SK-N-SH (cell line): ENCODE measurements at regions of chr5 and their contacts with region 1.

Region 1: DNA sequence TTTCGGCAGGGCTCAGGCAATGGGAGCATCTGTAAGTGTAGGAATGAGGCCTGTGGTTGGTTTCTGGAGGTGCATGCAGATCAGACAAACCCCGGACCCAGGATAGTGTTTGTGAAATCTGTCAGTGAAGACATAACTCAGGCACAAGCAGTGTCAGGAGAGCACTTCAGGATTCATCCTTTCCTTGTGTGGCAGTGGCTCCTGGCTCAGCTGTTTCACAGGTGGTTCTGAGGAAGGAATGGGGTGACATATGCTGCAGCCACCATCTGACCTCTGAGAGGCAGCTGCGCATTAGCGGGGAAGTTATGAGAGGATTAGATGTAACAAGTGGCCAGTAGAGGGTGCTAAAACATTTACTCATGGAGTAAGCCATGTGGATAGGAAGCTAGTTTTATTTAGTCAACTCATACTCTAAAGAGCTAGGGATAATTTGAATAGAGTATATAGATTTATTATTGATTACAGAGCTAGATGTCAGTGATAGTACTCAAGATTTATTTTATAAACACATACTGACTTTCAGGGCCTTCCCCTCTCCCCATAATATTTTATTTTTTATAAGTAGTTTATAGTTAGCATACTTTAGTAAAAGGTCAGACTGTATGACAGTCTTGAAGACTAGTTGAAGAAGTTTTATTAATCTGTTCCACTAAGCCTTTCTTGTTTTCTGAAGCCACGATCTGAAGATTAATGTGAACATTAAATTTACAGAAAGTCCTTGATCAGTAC is 28.4 kb downstream of the NNT start:
- DNase-seq: peak; percentile 48
- H3K4me3 ChIP-seq: peak overlapping the region in 1 of 2 experiments; percentile 21; a peak in 1 of 4 replicates
- H3K27ac ChIP-seq: no peak overlapping the region
- H3K4me1 ChIP-seq: peaks cover 0 to 4% of the 10 kb centered on the region in 2 experiments; a peak in 1 of 4 replicates
- H3K27me3 ChIP-seq: no peaks in the 10 kb centered on the region
- CTCF ChIP-seq: peak; percentile 83
- EP300 ChIP-seq: no peak
- RAD21 ChIP-seq: peak; percentile 75

Region 2: DNA sequence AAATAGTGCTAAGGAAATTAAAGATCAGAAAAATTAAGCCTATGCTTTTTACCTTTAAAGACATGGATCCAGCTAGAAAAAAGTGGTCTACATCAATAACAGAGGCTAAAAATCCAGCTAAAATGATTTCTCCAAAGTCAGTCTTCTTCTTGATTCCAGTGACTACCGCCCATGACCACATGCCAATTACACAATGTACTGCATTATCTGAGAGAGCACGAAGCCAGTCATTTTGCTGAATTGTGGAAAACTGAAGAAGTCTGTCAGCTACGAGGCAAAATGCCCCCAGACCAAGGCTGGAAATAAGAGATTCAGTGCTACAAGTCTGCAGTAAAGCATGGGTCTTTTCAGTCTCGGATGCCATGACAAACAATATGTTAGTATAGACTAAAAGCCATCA is 177.7 kb before region 1 on chr5:
- CTCF ChIA-PET with region 1: no interaction called
- POLR2A ChIA-PET with region 1: no interaction called
- DNase-seq: no peak
- H3K4me3 ChIP-seq: no peak overlapping the region
- H3K27ac ChIP-seq: no peak overlapping the region
- H3K4me1 ChIP-seq: no peaks in the 10 kb centered on the region
- H3K27me3 ChIP-seq: no peaks in the 10 kb centered on the region
- CTCF ChIP-seq: no peak
- EP300 ChIP-seq: no peak
- RAD21 ChIP-seq: no peak

Region 3: GRCh38 chr5:43616535-43616934 is 14.8 kb before region 1 on chr5:
- CTCF ChIA-PET with region 1: interaction called, 15 read pairs
- POLR2A ChIA-PET with region 1: no interaction called
- DNase-seq: no peak
- H3K4me3 ChIP-seq: no peak overlapping the region
- H3K27ac ChIP-seq: no peak overlapping the region
- H3K4me1 ChIP-seq: no peaks in the 10 kb centered on the region
- H3K27me3 ChIP-seq: no peaks in the 10 kb centered on the region
- CTCF ChIP-seq: no peak
- EP300 ChIP-seq: no peak
- RAD21 ChIP-seq: no peak

Region 4: DNA sequence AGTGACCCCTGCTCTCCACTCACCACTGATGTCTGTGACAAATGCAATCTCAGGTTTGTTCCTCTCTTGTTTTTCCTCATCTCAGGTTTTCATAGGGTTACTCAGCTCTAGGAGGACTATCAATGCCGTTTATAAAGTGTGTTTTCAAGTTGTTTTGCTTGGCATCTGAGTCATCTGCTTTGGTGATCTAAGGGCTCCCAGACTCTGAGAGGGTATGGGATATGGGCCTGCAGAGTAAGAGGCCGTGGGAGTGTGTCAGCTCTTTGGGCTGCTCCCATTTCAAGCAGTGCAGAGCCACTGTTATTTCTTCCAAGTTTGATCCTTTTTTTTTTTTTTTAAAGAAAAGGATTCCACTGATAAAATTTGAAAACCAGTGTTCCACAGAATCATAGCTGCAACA is 17.9 kb after region 1 on chr5:
- CTCF ChIA-PET with region 1: interaction called, 37 read pairs
- POLR2A ChIA-PET with region 1: no interaction called
- DNase-seq: no peak
- H3K4me3 ChIP-seq: no peak overlapping the region
- H3K27ac ChIP-seq: peak overlapping the region in 1 of 2 experiments; percentile 89; a peak in 2 of 4 replicates
- H3K4me1 ChIP-seq: peaks cover 0 to 7% of the 10 kb centered on the region in 2 experiments; a peak in 2 of 4 replicates
- H3K27me3 ChIP-seq: no peaks in the 10 kb centered on the region
- CTCF ChIP-seq: no peak
- EP300 ChIP-seq: no peak
- RAD21 ChIP-seq: no peak

Region 5: GRCh38 chr5:43676083-43676840 is 44.9 kb after region 1 on chr5:
- CTCF ChIA-PET with region 1: interaction called, 13 read pairs
- POLR2A ChIA-PET with region 1: no interaction called
- DNase-seq: no peak
- H3K4me3 ChIP-seq: no peak overlapping the region
- H3K27ac ChIP-seq: no peak overlapping the region
- H3K4me1 ChIP-seq: peaks cover 0 to 3% of the 10 kb centered on the region in 2 experiments; a peak in 2 of 4 replicates
- H3K27me3 ChIP-seq: no peaks in the 10 kb centered on the region
- CTCF ChIP-seq: no peak
- EP300 ChIP-seq: no peak
- RAD21 ChIP-seq: no peak

Region 6: DNA sequence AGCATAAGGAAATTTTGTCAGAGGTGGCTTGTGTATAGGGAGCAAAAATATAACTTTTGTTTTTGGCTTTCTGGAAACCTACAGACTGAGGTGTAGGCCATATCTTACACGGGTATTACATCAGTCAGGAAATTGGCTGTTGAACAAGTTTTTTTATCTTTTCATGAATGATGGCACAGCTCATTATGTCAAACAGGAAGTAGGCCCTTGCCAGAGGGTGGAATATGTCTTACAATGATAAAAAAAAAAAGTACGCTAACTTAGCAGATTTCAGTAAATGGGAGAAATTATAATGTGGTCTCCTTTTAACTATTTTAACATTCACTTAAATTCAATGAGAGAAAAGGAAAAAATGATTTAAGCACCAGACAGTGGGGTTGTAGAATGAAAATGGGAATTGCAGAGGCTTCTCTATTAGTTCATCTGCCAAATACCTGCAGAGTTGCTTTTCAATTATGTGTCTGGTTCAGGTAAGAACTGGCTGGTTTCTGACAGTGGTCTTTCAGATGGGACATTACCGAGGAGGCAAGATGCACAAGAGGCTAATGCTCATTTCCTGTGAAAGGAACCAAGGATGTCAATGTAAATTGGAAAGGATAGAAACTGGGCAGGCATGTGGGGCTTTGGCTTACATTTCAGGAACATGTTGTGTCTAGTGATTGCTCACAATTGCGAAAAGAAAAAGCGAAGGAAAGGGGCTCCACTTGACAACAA is 141.6 kb after region 1 on chr5:
- CTCF ChIA-PET with region 1: no interaction called
- POLR2A ChIA-PET with region 1: no interaction called
- DNase-seq: no peak
- H3K4me3 ChIP-seq: no peak overlapping the region
- H3K27ac ChIP-seq: peak overlapping the region; percentile 1 to 39; a peak in 3 of 4 replicates
- H3K4me1 ChIP-seq: peaks cover 0 to 31% of the 10 kb centered on the region in 2 experiments; a peak in 2 of 4 replicates
- H3K27me3 ChIP-seq: no peaks in the 10 kb centered on the region
- CTCF ChIP-seq: no peak
- EP300 ChIP-seq: no peak
- RAD21 ChIP-seq: no peak

Region 7: GRCh38 chr5:44332285-44332971 is 701.1 kb after region 1 on chr5:
- CTCF ChIA-PET with region 1: interaction called, 10 read pairs
- POLR2A ChIA-PET with region 1: no interaction called
- DNase-seq: peak; percentile 8
- H3K4me3 ChIP-seq: no peak overlapping the region
- H3K27ac ChIP-seq: no peak overlapping the region
- H3K4me1 ChIP-seq: no peaks in the 10 kb centered on the region
- H3K27me3 ChIP-seq: no peaks in the 10 kb centered on the region
- CTCF ChIP-seq: peak; percentile 77
- EP300 ChIP-seq: no peak
- RAD21 ChIP-seq: peak; percentile 52